ENCODE measurements at regions of chr14 and their contacts with region 1.

Region 1: DNA sequence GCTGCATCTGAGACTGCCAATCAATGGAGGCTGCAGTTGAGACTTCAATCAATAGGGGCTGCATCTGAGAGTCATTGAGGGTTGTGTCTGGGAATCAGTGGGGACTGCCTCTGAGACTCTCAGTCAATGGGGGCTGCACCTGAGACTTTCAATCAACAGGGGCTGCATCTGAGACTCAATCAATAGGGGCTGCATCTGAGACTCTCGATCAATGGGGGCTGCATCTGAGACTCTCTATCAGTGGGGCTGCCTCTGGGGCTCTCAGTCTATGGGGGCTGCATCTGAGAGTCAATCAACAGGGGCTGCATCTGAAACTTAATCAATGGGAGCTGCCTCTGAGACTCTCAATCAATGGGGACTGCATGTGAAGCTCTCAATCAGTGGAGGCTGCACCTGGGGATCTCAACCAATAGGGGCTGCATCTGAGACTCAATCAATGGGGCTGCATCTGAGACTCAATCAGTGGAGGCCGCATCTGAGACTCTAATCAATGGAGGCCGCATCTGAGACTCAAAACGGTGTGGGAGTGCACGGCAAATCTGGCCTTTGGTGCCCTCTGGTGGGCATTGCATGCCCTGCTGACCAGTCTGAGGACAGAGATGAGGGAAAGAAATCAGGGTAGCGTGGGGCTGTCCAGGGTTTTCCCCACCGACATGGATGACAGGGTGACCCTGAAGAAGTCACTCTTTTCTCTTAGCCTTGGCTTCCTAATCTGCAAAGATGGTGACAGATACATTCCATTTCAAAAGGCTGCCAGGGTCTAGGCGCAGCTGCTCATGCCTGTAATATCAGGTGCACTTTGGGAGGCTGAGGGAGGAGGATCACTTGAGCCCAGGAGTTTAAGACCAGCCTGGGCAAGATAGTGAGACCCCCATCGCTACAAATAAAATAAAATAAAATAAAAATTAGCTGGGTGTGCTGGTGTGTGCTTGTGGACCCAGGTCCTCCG is 41.3 kb upstream of the EIF5 start:
- DNase-seq: peak; percentile 69 to 79
- H3K4me3 ChIP-seq: no peak overlapping the region
- H3K27ac ChIP-seq: no peak overlapping the region
- H3K4me1 ChIP-seq: no peaks in the 10 kb centered on the region
- H3K27me3 ChIP-seq: no peaks in the 10 kb centered on the region
- CTCF ChIP-seq: peak; percentile 72 to 88 (median 86)
- POLR2A ChIP-seq: no peak

Region 2: GRCh38 chr14:103078093-103078749 is 214.5 kb before region 1 on chr14:
- intact Hi-C with region 1: loop called (anchors 10 kb)
- DNase-seq: peak; percentile 84 to 86
- H3K4me3 ChIP-seq: no peak overlapping the region
- H3K27ac ChIP-seq: no peak overlapping the region
- H3K4me1 ChIP-seq: peaks cover 4 to 17% of the 10 kb centered on the region in 2 donors
- H3K27me3 ChIP-seq: no peaks in the 10 kb centered on the region
- CTCF ChIP-seq: peak; percentile 47 to 84 (median 72)
- POLR2A ChIP-seq: no peak

Region 3: GRCh38 chr14:103104654-103105452 is 187.8 kb before region 1 on chr14:
- intact Hi-C with region 1: loop called (anchors 5 kb)
- DNase-seq: peak; percentile 64 to 76
- H3K4me3 ChIP-seq: no peak overlapping the region
- H3K27ac ChIP-seq: no peak overlapping the region
- H3K4me1 ChIP-seq: peaks cover 0 to 33% of the 10 kb centered on the region in 2 donors
- H3K27me3 ChIP-seq: peaks cover 9% of the 10 kb centered on the region
- CTCF ChIP-seq: peak; percentile 76 to 99 (median 94)
- POLR2A ChIP-seq: no peak

Region 4: GRCh38 chr14:103185051-103185992 is 107.4 kb before region 1 on chr14:
- intact Hi-C with region 1: loop called (anchors 5 kb)
- DNase-seq: no peak
- H3K4me3 ChIP-seq: no peak overlapping the region
- H3K27ac ChIP-seq: no peak overlapping the region
- H3K4me1 ChIP-seq: peaks cover 4 to 11% of the 10 kb centered on the region in 2 donors
- H3K27me3 ChIP-seq: no peaks in the 10 kb centered on the region
- CTCF ChIP-seq: peak; percentile 30 to 77 (median 72)
- POLR2A ChIP-seq: no peak

Region 5: GRCh38 chr14:103889313-103890051 is 596.8 kb after region 1 on chr14:
- intact Hi-C with region 1: no loop called
- DNase-seq: no peak
- H3K4me3 ChIP-seq: no peak overlapping the region
- H3K27ac ChIP-seq: no peak overlapping the region
- H3K4me1 ChIP-seq: peaks cover 0 to 23% of the 10 kb centered on the region in 2 donors
- H3K27me3 ChIP-seq: no peaks in the 10 kb centered on the region
- CTCF ChIP-seq: no peak
- POLR2A ChIP-seq: no peak

Measured in thyroid gland (tissue), 4 donors.